GM10248 (cell line): ENCODE measurements at regions of chr7 and their contacts with region 1.

Region 1: GRCh38 chr7:87173471-87173870 is 21.2 kb downstream of the DMTF1 start:
- DNase-seq: no peak
- CTCF ChIP-seq: no peak

Region 2: GRCh38 chr7:87187120-87187519 is 13.6 kb after region 1 on chr7:
- CTCF ChIA-PET with region 1: interaction called, 69 read pairs
- POLR2A ChIA-PET with region 1: no interaction called
- DNase-seq: no peak
- CTCF ChIP-seq: no peak

Region 3: DNA sequence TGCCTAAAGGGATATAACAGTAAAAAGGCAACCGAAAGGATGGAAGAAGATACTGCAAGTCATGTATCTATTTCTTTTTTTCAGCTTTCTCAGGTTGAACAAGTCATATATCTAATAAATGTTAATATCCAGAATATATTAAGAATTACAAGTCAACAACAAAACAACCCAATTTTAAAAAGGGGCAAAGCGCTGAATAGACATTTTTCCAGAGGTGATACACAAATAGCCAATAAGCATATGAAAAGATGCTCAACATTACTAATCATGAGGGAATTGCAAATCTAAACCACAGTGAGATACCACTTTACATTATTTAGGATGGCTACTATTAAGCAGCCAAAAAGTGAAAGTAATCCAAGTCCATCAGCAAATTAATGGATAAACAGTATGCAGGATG is 725.8 kb after region 1 on chr7:
- CTCF ChIA-PET with region 1: no interaction called
- POLR2A ChIA-PET with region 1: no interaction called
- DNase-seq: no peak
- CTCF ChIP-seq: no peak